Heart left ventricle (tissue), 16 donors: ENCODE measurements at regions of chr5 and their contacts with region 1.

Region 1: DNA sequence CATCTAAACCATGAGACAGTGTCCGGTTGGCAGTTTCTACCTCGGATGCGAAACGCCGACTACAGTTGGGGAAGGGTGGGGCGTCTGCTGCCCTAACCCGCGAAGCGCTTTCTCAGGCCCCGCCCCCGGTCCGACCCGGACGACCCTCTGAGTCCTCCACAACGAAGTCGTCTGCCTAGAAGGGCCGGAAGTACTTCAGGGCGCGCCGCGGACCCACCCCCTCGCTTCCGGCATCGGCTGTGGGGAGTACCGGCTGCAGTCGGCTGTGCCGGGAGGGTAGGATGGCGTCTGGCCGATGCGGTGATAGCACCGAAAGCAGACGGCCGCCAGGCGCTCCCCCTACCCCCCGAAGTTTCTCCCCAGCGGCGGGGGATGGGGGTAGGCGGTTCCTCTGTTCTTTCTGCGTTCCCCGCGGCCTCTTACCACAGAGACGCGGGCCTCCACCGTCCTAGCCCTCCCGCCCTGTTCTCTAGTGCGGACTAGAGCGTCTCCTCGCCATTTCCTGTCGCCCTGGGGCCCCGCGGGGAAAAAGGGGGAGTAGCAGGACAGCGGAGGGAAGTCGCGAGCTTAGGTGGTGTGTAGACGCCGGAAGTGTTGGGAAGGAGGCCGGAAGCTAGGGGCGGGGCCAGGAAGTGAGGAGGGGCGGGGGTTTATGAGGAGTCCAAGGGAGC is at the start of gene TRIM41:
- DNase-seq: peak; percentile 99 to 100 (median 99)
- ATAC-seq: peak; percentile 87 to 93 (median 90)
- H3K4me3 ChIP-seq: peak within 1 kb of the TSS; percentile 63 to 96 (median 83)
- H3K27ac ChIP-seq: peak within 1 kb of the TSS; percentile 92 to 100 (median 97)
- H3K4me1 ChIP-seq: peaks cover 0 to 48% (median 18%) of the 10 kb centered on the region in 12 donors
- H3K27me3 ChIP-seq: no peaks in the 10 kb centered on the region
- CTCF ChIP-seq: peak in 6 of 12 donors; percentile 19 to 37 (median 27)
- POLR2A ChIP-seq: peak in 1 of 2 donors; percentile 71
- total RNA-seq, gene TRIM41: 12.3 to 27.3 (median 23.9) TPM

Region 2: DNA sequence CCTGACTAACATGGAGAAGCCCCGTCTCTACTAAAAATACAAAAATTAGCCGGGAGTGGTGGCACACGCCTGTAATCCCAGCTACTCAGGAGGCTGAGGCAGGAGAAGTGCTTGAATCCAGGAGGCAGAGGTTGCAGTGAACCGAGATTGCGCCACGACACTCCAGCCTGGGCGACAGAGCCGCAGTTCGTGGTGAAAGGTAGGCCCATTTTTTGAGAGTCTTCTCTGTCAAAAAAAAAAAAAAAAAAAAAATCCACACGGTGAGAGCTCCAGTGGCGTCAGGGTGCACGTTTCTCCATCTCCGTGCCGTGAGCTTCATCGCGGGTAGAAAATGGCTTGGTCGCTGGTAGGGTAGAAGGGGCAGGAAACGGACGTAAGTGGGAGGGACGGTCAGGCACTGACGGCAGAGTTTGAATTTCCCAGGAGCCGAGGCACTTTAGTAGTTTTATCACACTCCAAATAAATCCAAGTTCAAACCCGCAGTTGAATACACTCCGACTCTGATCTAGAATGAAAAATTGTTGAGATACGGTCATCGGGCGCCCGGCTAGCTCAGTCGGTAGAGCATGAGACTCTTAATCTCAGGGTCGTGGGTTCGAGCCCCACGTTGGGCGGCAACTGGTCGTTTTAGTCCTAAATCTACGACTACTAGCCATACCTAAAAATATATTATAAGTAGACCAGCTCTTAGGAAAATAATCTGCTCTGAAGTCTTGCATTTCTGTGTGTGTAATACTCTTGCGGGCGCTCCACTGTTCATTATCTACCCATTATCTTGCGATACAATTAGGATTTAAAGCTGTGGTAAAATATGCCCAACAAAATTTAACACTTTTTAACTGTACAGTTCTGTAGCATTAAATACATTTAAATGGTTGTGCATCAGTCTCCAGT is 15.7 kb before region 1 on chr5:
- intact Hi-C with region 1: loop called in 5 of 10 experiments (anchors 1 to 2 kb)
- DNase-seq: peak; percentile 62 to 88 (median 79)
- ATAC-seq: peak; percentile 36 to 70 (median 50)
- H3K4me3 ChIP-seq: peak overlapping the region; percentile 35 to 77 (median 68)
- H3K27ac ChIP-seq: peak overlapping the region; percentile 30 to 90 (median 82)
- H3K4me1 ChIP-seq: peaks cover 4 to 46% (median 23%) of the 10 kb centered on the region in 12 donors
- H3K27me3 ChIP-seq: peaks cover 0 to 3% (median 0%) of the 10 kb centered on the region in 9 donors
- CTCF ChIP-seq: no peak
- POLR2A ChIP-seq: no peak

Region 3: GRCh38 chr5:181243512-181244343 is 20.5 kb after region 1 on chr5 and contains the start of gene RACK1:
- intact Hi-C with region 1: loop called in 9 of 10 experiments (anchors 1 to 2 kb)
- DNase-seq: peak; percentile 90 to 93 (median 92)
- ATAC-seq: peak; percentile 67 to 75 (median 70)
- H3K4me3 ChIP-seq: peak within 1 kb of the TSS; percentile 68 to 90 (median 80)
- H3K27ac ChIP-seq: peak within 1 kb of the TSS; percentile 83 to 99 (median 95)
- H3K4me1 ChIP-seq: peaks cover 3 to 74% (median 47%) of the 10 kb centered on the region in 12 donors
- H3K27me3 ChIP-seq: no peaks in the 10 kb centered on the region
- CTCF ChIP-seq: no peak
- POLR2A ChIP-seq: peak in 1 of 2 donors; percentile 63
- total RNA-seq, gene RACK1: 560 to 1,237 (median 771) TPM

Region 4: DNA sequence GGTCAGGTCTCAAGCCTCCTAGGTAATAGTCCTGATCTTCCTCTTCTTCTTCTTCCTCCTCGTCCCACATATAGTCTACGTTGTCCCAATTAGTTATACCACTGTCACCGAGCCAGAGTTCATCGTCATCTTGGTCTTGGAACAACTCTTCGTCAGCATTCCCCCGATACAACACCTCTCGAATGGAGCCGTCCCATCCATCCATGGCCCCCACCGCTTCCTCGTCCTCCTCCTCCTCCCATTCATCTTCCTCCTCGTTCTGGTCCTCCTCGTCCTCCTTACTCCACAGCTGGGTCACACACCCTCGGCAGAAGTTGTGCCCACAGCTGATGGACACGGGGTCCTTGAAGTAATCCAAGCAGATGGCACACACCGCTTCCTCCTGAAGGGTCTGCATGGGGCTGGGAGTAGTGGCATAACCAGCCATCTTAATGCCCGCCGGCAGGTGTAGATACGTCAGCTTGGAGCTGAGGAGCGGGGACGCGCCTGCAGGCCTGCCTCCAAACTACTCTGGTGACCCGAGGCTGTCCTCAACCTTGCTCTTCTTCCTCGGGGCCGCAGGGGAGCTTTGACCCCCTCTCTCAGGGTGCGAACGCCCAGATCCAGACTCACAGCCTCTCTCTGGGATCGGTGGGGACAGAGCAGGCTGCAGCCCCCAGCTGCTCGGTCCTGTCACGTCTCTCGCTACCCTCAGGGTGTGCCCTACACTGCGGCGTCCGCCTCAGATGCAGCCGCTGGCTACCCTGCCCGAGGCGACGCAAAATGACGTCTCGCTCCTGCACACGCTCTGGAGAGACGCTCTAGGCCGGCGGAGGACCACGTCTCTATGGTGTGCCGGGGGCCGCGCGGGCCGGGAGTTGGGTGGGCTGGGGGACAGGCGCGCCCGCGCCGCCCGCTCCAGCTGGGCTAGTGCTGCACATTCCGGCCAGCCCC is 37.5 kb after region 1 on chr5 and contains the start of gene TRIM52:
- intact Hi-C with region 1: loop called in 3 of 10 experiments (anchors 1 to 5 kb)
- DNase-seq: peak; percentile 92 to 96 (median 95)
- ATAC-seq: peak; percentile 88 to 95 (median 92)
- H3K4me3 ChIP-seq: peak within 1 kb of the TSS; percentile 69 to 100 (median 93)
- H3K27ac ChIP-seq: peak within 1 kb of the TSS; percentile 92 to 100 (median 98)
- H3K4me1 ChIP-seq: peaks cover 5 to 62% (median 47%) of the 10 kb centered on the region in 12 donors
- H3K27me3 ChIP-seq: no peaks in the 10 kb centered on the region
- CTCF ChIP-seq: no peak
- POLR2A ChIP-seq: peak; percentile 45 to 76
- total RNA-seq, gene TRIM52: 5.6 to 12.8 (median 7.6) TPM